RWPE1 (cell line): ENCODE measurements at regions of chr2 and their contacts with region 1.

Region 1: GRCh38 chr2:25376750-25377621 is 35.3 kb upstream of the DNMT3A start:
- DNase-seq: peak; percentile 88
- H3K27ac ChIP-seq: peak overlapping the region; percentile 88
- CTCF ChIP-seq: peak; percentile 96

Region 2: DNA sequence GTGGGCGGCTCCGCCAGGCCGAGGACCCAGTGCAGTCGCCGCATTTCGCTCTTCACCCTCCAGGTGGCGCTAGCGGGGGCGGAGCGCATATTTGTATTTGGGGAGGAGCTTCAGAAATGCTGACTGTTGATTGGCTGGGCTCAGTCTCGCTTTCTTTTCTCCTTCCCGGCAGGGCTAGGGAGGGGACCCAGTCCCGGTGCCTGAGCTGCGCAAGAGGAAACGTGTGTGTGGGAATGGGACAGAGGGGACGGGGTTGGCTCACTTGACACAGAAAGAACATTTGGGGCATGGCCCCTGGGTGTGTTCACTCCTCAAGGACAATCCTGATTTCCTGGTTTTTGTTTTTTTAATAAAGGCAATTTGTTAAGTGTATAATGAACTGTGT is 14.9 kb before region 1 on chr2:
- CTCF ChIA-PET with region 1: interaction called, 11 read pairs
- POLR2A ChIA-PET with region 1: no interaction called
- DNase-seq: peak; percentile 95
- H3K27ac ChIP-seq: peak overlapping the region; percentile 58
- CTCF ChIP-seq: peak; percentile 97